ENCODE measurements at regions of chr1 and their contacts with region 1.

Region 1: GRCh38 chr1:205211169-205211838 is at the start of gene DSTYK:
- DNase-seq: peak; percentile 96 to 97
- H3K4me3 ChIP-seq: peak within 1 kb of the TSS; percentile 89 to 94
- H3K27ac ChIP-seq: peak within 1 kb of the TSS; percentile 90 to 95
- H3K4me1 ChIP-seq: peaks cover 0 to 27% (median 14%) of the 10 kb centered on the region in 4 donors
- H3K27me3 ChIP-seq: no peaks in the 10 kb centered on the region
- CTCF ChIP-seq: no peak

Region 2: GRCh38 chr1:205121660-205122488 is 89.4 kb before region 1 on chr1 and contains the start of gene RBBP5:
- intact Hi-C with region 1: loop called (anchors 1 kb)
- DNase-seq: peak; percentile 94 to 97
- H3K4me3 ChIP-seq: peak within 1 kb of the TSS; percentile 76 to 96
- H3K27ac ChIP-seq: peak within 1 kb of the TSS; percentile 87 to 92
- H3K4me1 ChIP-seq: peaks cover 0 to 36% (median 25%) of the 10 kb centered on the region in 4 donors
- H3K27me3 ChIP-seq: no peaks in the 10 kb centered on the region
- CTCF ChIP-seq: peak; percentile 30 to 55